PC-9 (cell line): ENCODE measurements at regions of chr13 and their contacts with region 1.

Region 1: DNA sequence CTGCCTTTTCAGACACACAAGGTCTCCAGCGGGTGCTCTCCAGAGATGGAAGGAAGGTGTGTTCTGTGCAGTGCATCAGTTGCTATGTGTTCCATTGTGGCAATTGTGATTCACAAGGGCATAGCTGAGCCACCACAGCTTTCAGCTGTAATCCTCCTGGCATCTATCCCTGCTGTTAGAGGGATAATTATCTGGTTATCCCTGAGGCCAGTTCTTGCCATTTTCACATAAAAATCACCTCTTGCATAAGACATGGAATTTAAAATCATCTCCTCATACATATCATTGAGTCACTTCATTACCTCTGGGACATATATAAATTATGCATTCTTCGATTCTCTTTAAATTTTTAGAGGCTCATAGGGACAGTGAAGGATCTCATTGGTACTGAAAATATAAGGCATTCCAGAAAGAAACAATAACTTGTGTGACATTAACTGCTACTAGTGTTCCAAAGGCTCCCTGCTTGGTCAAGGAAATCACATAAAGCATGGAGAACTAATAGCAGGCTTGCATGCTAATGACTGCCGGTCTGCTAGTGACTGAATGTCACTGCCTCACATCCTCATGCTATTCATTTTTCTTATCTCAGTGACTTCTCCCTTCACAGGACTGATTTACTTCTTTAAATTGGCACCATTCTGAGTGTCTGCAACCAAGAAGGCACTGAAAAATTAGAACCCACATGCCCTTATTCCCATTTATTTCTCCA is 214.0 kb downstream of the ENOX1 start:
- DNase-seq: peak; percentile 19 to 43
- H3K4me3 ChIP-seq: no peak overlapping the region
- H3K27ac ChIP-seq: peak overlapping the region; percentile 39; the same call in 1 of the 2 replicates
- H3K4me1 ChIP-seq: peaks cover 7% of the 10 kb centered on the region
- H3K27me3 ChIP-seq: no peaks in the 10 kb centered on the region
- CTCF ChIP-seq: no peak

Region 2: DNA sequence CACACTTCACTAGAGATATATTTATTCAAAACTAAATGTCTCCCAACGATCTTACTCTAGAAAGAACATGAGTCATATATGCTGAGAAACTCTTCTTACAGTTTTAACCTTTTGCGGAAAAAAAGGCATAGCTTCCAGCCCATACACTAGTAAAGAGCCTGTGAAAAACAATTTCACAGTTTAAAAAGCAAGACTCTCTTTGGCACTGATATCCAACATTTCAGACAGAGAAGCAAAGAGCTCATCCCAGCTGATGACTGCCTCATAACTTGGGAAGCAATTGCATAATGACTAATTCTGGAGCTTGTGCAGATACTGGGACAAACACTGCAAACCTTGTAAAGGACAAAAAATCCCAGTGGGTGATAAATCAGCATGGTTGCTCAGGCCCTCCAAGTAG is 125.9 kb after region 1 on chr13:
- CTCF ChIA-PET with region 1: no interaction called
- POLR2A ChIA-PET with region 1: no interaction called
- intact Hi-C with region 1: no loop called
- DNase-seq: no peak
- H3K4me3 ChIP-seq: no peak overlapping the region
- H3K27ac ChIP-seq: no peak overlapping the region
- H3K4me1 ChIP-seq: no peaks in the 10 kb centered on the region
- H3K27me3 ChIP-seq: no peaks in the 10 kb centered on the region
- CTCF ChIP-seq: no peak

Region 3: DNA sequence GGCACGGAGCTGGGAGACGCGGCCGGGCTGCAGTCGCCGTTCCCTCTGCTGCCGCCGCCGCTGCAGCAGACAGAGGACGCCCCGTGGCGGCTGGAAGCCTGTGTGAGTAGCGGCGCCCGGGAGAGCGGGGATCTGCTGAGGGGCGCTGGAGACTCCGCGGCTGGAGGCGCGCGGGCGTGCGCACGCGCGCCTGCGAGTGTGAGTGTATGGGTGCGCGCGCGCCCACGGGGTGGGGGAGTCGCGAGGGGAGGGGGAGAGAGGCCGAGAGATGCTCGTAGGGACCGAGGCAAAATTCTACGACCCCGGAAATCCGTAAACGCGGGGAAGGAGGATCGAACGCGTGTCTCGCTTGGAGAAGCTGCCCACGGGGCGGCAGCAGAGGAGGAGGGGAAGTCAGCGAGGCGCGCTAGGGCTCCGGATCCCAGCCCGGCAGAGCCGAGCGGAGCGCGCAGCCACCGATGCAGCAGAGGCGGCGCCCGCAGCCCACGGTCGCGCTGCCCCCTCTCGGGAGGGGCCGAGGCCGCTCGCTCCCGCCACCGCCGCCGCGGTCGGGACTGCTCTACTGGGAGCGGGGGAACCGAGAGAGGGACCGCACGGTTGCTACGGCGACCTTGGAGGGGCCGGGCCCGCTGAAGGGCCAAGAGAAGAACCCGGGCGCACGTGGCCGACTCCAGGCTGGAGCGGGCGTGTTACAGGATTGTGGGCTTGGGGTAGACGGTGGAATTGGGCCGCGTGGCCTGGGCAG is 214.1 kb after region 1 on chr13 and contains the start of gene ENOX1:
- CTCF ChIA-PET with region 1: no interaction called
- POLR2A ChIA-PET with region 1: no interaction called
- intact Hi-C with region 1: loop called (anchors 10 kb)
- DNase-seq: peak in 1 of 2 experiments; percentile 32
- H3K4me3 ChIP-seq: peak within 1 kb of the TSS; percentile 76
- H3K27ac ChIP-seq: no peak within 1 kb of the TSS
- H3K4me1 ChIP-seq: peaks cover 16% of the 10 kb centered on the region
- H3K27me3 ChIP-seq: no peaks in the 10 kb centered on the region
- CTCF ChIP-seq: no peak
- total RNA-seq, gene ENOX1: 0.35 and 0.38 TPM in 2 replicates

Region 4: GRCh38 chr13:45231722-45232121 is 1658.9 kb after region 1 on chr13:
- CTCF ChIA-PET with region 1: no interaction called
- POLR2A ChIA-PET with region 1: no interaction called
- intact Hi-C with region 1: no loop called
- DNase-seq: no peak
- H3K4me3 ChIP-seq: no peak overlapping the region
- H3K27ac ChIP-seq: no peak overlapping the region
- H3K4me1 ChIP-seq: peaks cover 9% of the 10 kb centered on the region; the same call in 1 of the 2 replicates
- H3K27me3 ChIP-seq: no peaks in the 10 kb centered on the region
- CTCF ChIP-seq: no peak